Activated CD4-positive, alpha-beta memory T cell treated with anti-CD3 and anti-CD28 coated beads for 36 hours (primary cell): ENCODE measurements at regions of chr1 and their contacts with region 1.

Region 1: DNA sequence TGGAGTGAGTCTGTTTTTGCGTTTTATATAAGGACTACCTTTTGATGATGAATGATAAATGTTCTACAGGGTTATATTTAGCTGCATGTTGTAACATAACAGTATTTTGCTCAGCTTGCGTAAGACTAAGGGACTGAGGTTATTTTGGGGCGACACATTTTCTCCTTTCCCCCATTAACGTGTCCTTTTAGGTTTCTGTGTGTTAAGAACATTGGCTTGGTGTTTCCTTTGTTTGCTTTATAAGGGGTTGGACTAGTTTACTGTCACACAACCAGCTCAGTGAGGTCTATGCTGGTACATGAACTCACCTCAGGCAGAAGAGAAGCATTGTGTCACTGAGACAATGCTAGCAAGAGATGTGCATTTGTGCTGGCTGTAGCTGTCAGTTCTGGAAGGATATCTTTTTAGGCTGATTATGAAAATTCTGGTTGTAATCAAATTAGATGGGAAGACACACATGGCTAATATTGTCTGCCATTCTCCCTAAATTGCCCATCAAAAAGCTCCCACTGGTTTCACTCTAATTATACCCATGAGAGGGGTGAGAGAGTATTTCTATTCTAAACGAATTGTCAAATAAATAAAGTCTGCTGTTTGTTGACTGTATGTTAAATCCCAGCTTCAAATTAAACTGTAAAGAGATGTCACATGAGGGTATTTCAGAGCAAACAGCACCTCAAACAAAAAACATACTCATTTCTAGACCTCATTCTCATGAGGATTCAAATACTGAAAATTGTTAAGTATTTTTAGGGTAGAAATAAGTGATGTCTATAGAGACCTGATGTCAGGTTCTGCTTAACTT is 62.6 kb downstream of the CDC14A start:
- DNase-seq: no peak
- H3K4me3 Mint-ChIP-seq: peak overlapping the region; percentile 39
- H3K27ac Mint-ChIP-seq: peak overlapping the region; percentile 90
- H3K4me1 Mint-ChIP-seq: peaks cover 72% of the 10 kb centered on the region
- H3K27me3 Mint-ChIP-seq: no peaks in the 10 kb centered on the region

Region 2: GRCh38 chr1:100400404-100400803 is 14.5 kb before region 1 on chr1:
- CTCF ChIA-PET with region 1: interaction called, 5 read pairs
- POLR2A ChIA-PET with region 1: interaction called, 5 read pairs
- intact Hi-C with region 1: loop called (anchors 1 kb)
- DNase-seq: peak; percentile 67
- H3K4me3 Mint-ChIP-seq: peak overlapping the region; percentile 53
- H3K27ac Mint-ChIP-seq: peak overlapping the region; percentile 91
- H3K4me1 Mint-ChIP-seq: peaks cover 83% of the 10 kb centered on the region
- H3K27me3 Mint-ChIP-seq: no peaks in the 10 kb centered on the region